Naive thymus-derived CD4-positive, alpha-beta T cell (primary cell): ENCODE measurements at regions of chr13 and their contacts with region 1.

Region 1: DNA sequence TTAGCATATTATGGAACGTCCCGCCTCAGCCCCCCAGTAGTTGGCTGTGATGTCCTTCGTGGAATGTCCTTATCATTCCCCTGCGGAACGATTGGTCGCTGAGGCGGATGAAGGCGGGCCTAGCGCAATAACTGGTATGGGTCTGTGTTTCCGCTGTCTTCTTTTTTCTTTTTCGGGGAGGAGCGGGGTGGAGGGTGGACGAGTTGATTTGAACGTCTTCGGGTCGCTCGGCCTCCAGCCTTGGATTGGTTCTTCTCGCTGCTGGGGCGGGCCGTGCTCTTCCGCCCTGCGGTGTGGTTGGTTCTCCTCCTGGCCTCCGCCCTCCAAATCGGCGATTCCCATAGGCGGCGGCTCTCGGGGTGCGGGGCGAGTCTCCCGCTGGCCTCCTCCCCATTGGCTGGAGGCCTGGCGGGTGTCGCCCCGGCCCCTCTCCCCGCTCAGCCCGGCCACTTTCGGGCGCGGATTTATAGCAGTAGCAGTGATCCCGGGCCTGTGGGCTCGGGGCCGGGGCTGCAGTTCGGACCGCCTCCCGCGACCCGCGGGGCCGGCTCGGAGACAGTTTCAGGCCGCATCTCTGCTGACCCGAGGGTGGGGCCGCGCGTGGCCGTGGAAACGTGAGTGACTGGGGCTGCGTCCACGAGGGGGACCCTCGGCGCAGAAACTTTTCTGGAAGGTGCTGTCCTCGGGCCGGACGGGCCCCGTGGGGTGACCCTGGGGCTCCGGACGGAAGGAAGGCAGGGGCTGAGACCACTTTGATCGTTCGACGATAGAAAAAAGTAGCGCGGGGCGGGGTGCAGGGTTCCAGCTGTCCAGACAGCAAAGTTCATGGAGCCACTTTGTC is 2.1 kb downstream of the ING1 start:
- DNase-seq: peak; percentile 87 to 99 (median 99)
- ATAC-seq: peak; percentile 71
- H3K4me3 ChIP-seq: peak overlapping the region; percentile 68
- H3K4me3 Mint-ChIP-seq: peak overlapping the region; percentile 93 to 100 (median 98)
- H3K27ac ChIP-seq: peak overlapping the region; percentile 92
- H3K27ac Mint-ChIP-seq: peak overlapping the region; percentile 96 to 100 (median 98)
- H3K4me1 ChIP-seq: peaks cover 0 to 20% of the 10 kb centered on the region in 2 donors
- H3K4me1 Mint-ChIP-seq: peaks cover 21 to 56% (median 37%) of the 10 kb centered on the region in 7 donors
- H3K27me3 ChIP-seq: no peaks in the 10 kb centered on the region
- H3K27me3 Mint-ChIP-seq: peaks cover 0 to 4% (median 0%) of the 10 kb centered on the region in 5 donors

Region 2: DNA sequence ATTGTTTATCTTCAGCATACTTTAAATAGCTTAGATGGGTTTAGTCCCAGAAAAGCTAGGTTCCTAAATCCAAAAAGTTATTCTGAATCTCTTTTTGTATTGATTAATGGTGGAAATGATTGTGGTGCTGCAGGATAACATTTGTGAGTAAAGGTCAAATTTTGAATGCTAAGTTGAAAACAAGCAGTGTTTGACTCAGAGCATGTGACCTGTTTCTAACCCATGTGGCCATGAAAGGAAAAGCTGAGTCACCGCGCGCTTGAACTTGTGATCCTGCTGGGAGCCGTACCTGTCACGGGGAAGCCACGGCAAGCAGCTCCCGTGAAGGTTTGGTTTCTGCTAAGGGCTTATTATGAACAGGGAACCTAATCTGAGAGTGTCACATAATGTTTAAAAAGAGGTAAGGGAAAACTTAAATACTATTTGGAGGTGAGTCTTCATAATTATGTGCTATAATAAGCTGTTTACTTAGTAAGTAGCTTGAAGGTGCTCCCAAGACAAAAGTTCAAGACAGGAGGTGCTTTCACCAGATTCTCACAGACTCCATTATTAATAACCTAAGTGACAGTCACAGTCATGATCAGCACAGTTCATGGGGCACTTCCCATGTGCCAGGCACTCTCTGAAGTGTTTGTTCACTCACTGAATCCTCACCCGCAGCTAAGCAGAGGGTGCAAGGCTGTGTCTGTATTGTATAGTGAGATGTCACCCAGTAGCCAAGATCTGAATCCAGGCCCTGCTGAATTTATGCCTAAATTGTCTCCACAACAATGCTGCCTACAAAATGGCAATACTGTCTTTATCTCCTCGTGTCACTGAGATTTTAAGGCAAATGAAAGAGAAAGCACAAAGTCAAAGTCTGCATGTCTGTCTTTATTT is 1799.7 kb before region 1 on chr13:
- CTCF ChIA-PET with region 1: no interaction called
- POLR2A ChIA-PET with region 1: no interaction called
- intact Hi-C with region 1: loop called in 1 of 2 experiments (anchors 10 kb)
- DNase-seq: peak in 4 of 9 donors; percentile 6 to 77 (median 32)
- ATAC-seq: peak; percentile 68
- H3K4me3 ChIP-seq: no peak overlapping the region
- H3K4me3 Mint-ChIP-seq: peak overlapping the region in 9 of 10 donors; percentile 26 to 82 (median 62)
- H3K27ac ChIP-seq: no peak overlapping the region
- H3K27ac Mint-ChIP-seq: peak overlapping the region in 3 of 9 donors; percentile 22 to 96 (median 77)
- H3K4me1 ChIP-seq: peaks cover 0 to 6% of the 10 kb centered on the region in 2 donors
- H3K4me1 Mint-ChIP-seq: peaks cover 7 to 20% (median 17%) of the 10 kb centered on the region in 7 donors
- H3K27me3 ChIP-seq: no peaks in the 10 kb centered on the region
- H3K27me3 Mint-ChIP-seq: peaks cover 3 to 16% (median 9%) of the 10 kb centered on the region in 5 donors

Region 3: GRCh38 chr13:110593430-110594130 is 122.0 kb before region 1 on chr13:
- CTCF ChIA-PET with region 1: no interaction called
- POLR2A ChIA-PET with region 1: interaction called, 6 read pairs
- intact Hi-C with region 1: loop called in 1 of 2 experiments (anchors 1 kb)
- DNase-seq: peak in 4 of 9 donors; percentile 16 to 40 (median 30)
- ATAC-seq: peak; percentile 77
- H3K4me3 ChIP-seq: no peak overlapping the region
- H3K4me3 Mint-ChIP-seq: no peak overlapping the region
- H3K27ac ChIP-seq: no peak overlapping the region
- H3K27ac Mint-ChIP-seq: no peak overlapping the region
- H3K4me1 ChIP-seq: no peaks in the 10 kb centered on the region
- H3K4me1 Mint-ChIP-seq: peaks cover 0 to 4% (median 0%) of the 10 kb centered on the region in 7 donors
- H3K27me3 ChIP-seq: no peaks in the 10 kb centered on the region
- H3K27me3 Mint-ChIP-seq: peaks cover 0 to 20% (median 0%) of the 10 kb centered on the region in 5 donors

Region 4: DNA sequence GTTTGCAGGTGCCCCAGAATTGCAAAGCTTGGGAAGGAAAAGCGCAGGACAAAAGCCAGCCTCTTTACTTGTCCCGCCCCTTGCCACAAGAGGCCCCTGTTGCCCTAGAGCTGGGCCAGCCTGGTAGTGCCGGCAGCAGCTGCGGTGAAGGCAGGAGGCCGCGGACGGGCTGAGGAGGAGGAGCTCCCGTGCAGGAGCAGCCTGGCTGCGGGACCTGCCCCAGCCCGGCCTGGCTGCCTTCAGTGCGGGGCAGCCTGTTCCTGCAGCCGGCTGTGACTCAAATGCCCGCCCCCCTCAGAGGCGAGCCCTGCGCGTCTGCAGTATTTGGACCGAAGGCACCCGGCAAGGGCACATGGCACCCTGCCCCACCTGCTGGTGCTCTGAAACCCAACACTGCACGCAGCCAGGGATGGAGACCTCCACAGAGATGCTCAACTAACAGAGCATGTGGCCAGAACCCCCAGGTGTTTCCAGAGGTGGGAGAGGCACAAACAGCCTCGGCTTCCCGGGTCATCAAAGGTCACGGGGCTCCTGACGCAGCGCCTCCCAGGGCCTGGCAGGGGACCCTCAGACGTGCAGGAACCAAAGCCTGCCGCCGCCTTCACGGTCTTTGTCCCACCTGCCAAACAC is 70.6 kb before region 1 on chr13:
- CTCF ChIA-PET with region 1: no interaction called
- POLR2A ChIA-PET with region 1: interaction called, 4 read pairs
- intact Hi-C with region 1: loop called (anchors 2 kb)
- DNase-seq: peak in 8 of 9 donors; percentile 34 to 66 (median 48)
- ATAC-seq: peak; percentile 95
- H3K4me3 ChIP-seq: no peak overlapping the region
- H3K4me3 Mint-ChIP-seq: no peak overlapping the region
- H3K27ac ChIP-seq: no peak overlapping the region
- H3K27ac Mint-ChIP-seq: peak overlapping the region in 4 of 9 donors; percentile 25 to 65 (median 32)
- H3K4me1 ChIP-seq: no peaks in the 10 kb centered on the region
- H3K4me1 Mint-ChIP-seq: peaks cover 0 to 6% (median 0%) of the 10 kb centered on the region in 7 donors
- H3K27me3 ChIP-seq: no peaks in the 10 kb centered on the region
- H3K27me3 Mint-ChIP-seq: no peaks in the 10 kb centered on the region

Region 5: DNA sequence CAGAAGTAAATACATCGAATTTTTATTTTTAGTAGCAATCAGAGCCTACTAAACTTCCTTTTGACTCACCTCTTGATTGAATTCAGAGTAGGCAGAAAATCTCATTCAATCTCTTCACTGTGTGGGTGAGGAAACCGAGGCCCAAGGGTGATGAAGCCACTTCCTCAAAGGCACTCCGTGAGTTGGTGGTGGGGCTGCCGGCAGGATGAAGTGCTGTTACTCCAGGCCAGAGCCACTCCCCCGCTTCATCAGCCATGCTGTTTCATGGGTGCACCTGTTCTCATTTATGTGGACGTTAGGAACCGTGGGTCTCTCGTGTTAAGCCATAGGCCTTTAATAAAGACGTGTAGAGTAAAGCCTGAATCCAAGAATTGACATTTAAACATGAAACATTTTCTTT is 11.1 kb after region 1 on chr13:
- CTCF ChIA-PET with region 1: no interaction called
- POLR2A ChIA-PET with region 1: interaction called, 8 read pairs
- intact Hi-C with region 1: loop called (anchors 1 kb)
- DNase-seq: peak in 7 of 9 donors; percentile 11 to 55 (median 19)
- ATAC-seq: peak; percentile 86
- H3K4me3 ChIP-seq: no peak overlapping the region
- H3K4me3 Mint-ChIP-seq: peak overlapping the region; percentile 14 to 72 (median 56)
- H3K27ac ChIP-seq: peak overlapping the region; percentile 44
- H3K27ac Mint-ChIP-seq: peak overlapping the region; percentile 5 to 93 (median 81)
- H3K4me1 ChIP-seq: peaks cover 0 to 17% of the 10 kb centered on the region in 2 donors
- H3K4me1 Mint-ChIP-seq: peaks cover 21 to 43% (median 35%) of the 10 kb centered on the region in 7 donors
- H3K27me3 ChIP-seq: no peaks in the 10 kb centered on the region
- H3K27me3 Mint-ChIP-seq: no peaks in the 10 kb centered on the region

Region 6: DNA sequence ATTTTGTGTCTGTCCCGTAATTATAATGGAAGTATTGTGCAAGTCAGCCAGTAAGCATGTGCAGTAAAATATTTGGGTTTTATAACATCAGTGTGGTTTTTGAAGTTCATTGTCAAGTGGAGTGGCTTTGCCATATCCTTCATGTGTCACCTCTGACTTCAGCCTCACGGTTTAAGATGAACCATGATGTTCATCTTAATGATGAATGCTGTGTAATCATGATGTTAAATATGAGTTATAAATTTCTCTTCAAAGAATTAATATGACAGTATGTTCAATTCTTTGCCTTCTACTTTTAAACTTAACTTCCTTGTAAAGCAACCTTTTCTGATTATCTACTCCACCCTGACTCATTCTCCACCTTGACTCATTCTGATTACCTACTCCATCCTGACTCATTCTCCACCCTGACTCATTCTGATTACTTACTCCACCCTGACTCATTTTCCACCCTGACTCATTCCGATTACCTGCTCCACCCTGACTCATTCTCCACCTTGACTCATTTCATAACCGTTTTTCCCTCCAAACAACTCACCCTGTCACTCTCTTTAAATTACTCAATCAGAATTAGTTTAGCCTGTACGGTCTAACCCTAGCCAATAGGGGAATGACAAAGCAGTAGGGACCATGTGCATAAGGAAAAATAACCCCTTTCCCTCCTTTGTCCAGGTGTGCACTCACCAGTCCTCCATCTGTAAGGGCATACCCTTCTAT is 249.6 kb after region 1 on chr13:
- CTCF ChIA-PET with region 1: no interaction called
- POLR2A ChIA-PET with region 1: no interaction called
- intact Hi-C with region 1: loop called in 1 of 2 experiments (anchors 2 kb)
- DNase-seq: no peak
- ATAC-seq: peak; percentile 26
- H3K4me3 ChIP-seq: no peak overlapping the region
- H3K4me3 Mint-ChIP-seq: peak overlapping the region in 1 of 10 donors; percentile 37
- H3K27ac ChIP-seq: no peak overlapping the region
- H3K27ac Mint-ChIP-seq: peak overlapping the region in 1 of 9 donors; percentile 79
- H3K4me1 ChIP-seq: no peaks in the 10 kb centered on the region
- H3K4me1 Mint-ChIP-seq: peaks cover 0 to 16% (median 0%) of the 10 kb centered on the region in 7 donors
- H3K27me3 ChIP-seq: no peaks in the 10 kb centered on the region
- H3K27me3 Mint-ChIP-seq: peaks cover 0 to 18% (median 8%) of the 10 kb centered on the region in 5 donors

Region 7: DNA sequence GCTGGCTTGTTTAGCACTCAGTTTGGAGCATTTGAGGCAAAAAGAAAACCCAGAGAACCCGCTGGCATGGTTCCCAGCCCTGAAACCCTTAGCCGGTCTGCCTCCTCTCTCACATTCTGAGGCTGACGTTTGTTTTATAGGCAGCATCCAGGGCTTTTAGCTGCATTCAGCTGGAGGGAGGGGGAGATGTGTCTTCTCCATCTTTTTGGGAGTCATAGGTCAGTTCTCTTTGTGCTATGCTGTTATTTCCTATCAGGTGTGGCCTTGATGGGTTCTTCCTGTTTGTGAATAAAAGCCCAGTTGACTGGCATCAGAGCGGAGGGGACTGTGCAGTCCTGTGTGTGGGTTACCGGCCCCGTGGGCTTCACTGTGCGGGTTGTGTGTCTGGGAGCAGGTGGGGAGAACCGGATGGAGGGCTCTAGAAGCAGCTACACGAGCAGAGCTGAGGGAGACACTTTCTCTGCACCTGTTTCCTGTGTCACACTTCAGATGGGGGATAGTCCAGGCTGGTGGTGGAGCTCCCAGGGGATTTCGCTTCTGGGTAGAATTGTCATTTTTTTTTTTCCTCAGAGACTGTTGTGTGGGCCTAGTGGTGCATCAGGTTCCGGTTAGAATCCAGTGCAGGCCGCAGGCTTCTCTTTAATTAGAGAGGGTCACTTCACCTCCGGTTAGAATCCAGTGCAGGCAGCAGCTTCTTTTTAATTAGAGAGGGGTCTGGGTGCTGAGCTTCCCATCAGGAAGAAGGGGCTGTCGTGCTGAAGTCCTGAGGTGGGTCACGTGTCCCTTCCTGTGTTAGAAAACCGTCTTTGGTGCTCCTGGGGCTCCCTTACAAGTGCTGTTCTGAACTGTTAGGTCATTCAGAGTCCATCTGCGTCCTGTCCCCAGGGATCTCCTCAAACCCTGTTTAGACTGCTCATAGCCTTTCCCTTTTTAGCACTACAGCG is 469.1 kb after region 1 on chr13:
- CTCF ChIA-PET with region 1: no interaction called
- POLR2A ChIA-PET with region 1: interaction called, 4 read pairs
- intact Hi-C with region 1: loop called in 1 of 2 experiments (anchors 10 kb)
- DNase-seq: peak in 7 of 9 donors; percentile 52 to 68 (median 55)
- ATAC-seq: peak; percentile 67
- H3K4me3 ChIP-seq: peak overlapping the region; percentile 22
- H3K4me3 Mint-ChIP-seq: peak overlapping the region; percentile 65 to 88 (median 82)
- H3K27ac ChIP-seq: peak overlapping the region; percentile 62
- H3K27ac Mint-ChIP-seq: peak overlapping the region; percentile 84 to 98 (median 93)
- H3K4me1 ChIP-seq: peaks cover 50 to 92% of the 10 kb centered on the region in 2 donors
- H3K4me1 Mint-ChIP-seq: peaks cover 84 to 100% (median 95%) of the 10 kb centered on the region in 7 donors
- H3K27me3 ChIP-seq: no peaks in the 10 kb centered on the region
- H3K27me3 Mint-ChIP-seq: no peaks in the 10 kb centered on the region